Brain microvascular endothelial cell (primary cell): ENCODE measurements at regions of chr20 and their contacts with region 1.

Region 1: DNA sequence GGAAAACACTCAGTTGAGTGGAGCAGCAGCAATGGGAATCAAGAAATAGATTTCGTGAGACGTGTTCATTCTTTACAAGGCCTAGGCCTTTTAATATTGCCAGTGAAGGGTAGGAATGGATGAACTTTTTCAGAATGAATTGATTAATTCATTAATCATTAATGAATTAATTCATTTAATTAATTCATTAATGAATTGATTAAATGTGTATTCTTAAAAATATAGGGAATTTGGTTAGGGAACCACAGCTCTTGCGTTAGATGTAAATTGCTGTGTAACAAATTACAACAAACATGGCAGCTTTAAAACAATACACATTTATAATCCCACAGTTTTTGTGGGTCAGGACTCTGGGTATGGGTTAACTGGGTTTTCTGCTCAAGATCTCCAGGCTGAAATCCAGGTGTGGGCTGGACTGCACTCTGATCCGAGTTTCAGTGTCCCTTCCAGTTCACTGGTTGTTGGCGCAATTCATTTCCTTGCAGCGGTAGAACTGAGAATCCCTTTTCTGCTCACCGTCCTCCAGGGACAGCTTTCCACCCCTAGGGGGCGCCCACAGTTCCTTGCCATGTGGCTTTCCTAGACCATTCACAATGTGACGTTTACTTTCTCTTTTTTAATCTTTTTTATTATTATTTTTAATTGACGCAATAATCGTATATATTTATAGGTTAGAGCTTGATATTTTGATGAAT is 32.8 kb upstream of the BCAS1 start:
- DNase-seq: peak; percentile 78
- H3K4me3 ChIP-seq: no peak overlapping the region
- H3K27ac ChIP-seq: no peak overlapping the region
- H3K27me3 ChIP-seq: no peaks in the 10 kb centered on the region
- CTCF ChIP-seq: peak; percentile 99

Region 2: GRCh38 chr20:53547664-53548239 is 555.5 kb before region 1 on chr20:
- in situ Hi-C with region 1: no loop called
- DNase-seq: peak; percentile 48
- H3K4me3 ChIP-seq: no peak overlapping the region
- H3K27ac ChIP-seq: no peak overlapping the region
- H3K27me3 ChIP-seq: no peaks in the 10 kb centered on the region
- CTCF ChIP-seq: peak; percentile 79

Region 3: DNA sequence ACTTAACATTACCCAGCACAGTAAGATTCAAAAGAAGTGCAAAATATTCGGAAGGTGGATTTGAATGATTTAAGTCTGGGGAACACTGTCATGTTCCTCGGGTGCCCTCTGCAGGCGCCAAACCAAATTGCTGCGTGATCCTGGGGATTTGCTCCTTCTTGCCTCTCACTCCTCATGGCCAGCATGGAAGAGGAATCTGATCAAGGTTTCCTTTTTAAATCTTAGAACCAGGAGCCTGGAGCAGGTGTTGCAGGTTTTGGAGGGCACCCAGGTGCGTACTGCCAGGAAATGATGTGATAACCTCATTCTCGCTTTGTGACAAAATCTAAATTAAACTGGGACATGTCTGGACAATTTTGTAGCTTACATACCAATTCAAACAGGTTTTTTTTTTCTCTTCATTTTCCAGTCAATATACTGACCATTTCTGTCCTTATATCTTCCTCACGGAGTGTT is 96.5 kb after region 1 on chr20:
- in situ Hi-C with region 1: loop called (anchors 10 kb)
- DNase-seq: peak; percentile 77
- H3K4me3 ChIP-seq: no peak overlapping the region
- H3K27ac ChIP-seq: no peak overlapping the region
- H3K27me3 ChIP-seq: no peaks in the 10 kb centered on the region
- CTCF ChIP-seq: peak; percentile 93